Left lung (tissue), 14 donors: ENCODE measurements at regions of chr19 and their contacts with region 1.

Region 1: GRCh38 chr19:2385053-2385721 is 25.1 kb downstream of the TMPRSS9 start:
- DNase-seq: no peak
- ATAC-seq: peak; percentile 27
- H3K4me3 ChIP-seq: no peak overlapping the region
- H3K27ac ChIP-seq: no peak overlapping the region
- H3K4me1 ChIP-seq: peaks cover 0 to 18% of the 10 kb centered on the region in 2 donors
- H3K27me3 ChIP-seq: peaks cover 0 to 70% of the 10 kb centered on the region in 2 donors
- CTCF ChIP-seq: no peak

Region 2: DNA sequence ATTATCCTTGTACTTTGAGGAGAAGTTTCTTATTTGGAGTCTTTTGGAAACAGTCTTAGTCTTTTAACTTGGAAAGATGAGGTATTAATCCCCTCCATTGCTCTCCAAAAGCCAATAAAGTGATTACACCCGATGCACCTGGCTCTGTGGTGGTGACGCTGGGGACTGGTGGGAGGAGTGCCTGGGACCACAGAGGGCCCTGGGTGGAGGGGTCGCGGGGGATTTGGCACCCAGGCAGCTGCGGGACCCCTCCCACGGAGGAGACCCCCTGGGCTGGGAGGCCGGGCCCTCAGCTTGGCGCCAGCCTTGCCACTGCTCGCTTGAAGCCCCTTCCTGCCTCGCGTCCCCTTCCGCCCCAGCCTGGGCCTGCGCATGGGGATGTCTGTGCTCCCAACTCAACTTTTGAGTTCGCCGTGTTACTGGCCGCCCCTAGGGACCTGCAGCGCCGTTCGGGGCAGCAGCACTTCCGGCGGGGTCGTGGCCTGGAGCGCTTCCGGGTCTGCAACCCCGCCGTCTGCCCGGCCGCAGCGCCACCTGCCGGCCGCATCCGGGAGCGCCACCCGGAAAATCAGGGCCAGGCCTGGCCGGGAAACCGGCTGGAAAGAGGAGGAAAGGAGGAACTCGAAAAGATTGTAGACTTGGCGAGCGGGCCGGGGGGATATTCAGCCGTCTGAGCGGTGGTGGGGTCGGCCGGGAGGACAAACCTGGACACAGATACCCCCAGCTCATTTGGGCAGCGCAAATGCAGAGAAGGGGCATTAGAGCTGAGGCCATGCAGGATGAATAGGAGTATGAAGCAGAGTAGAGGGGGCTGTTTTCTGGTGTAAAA is 111.6 kb before region 1 on chr19:
- intact Hi-C with region 1: loop called in 1 of 2 experiments (anchors 10 kb)
- DNase-seq: peak in 3 of 4 donors; percentile 70 to 94 (median 76)
- ATAC-seq: peak; percentile 19
- H3K4me3 ChIP-seq: peak overlapping the region in 1 of 2 donors; percentile 99
- H3K27ac ChIP-seq: peak overlapping the region; percentile 63 to 77
- H3K4me1 ChIP-seq: peaks cover 38 to 67% of the 10 kb centered on the region in 2 donors
- H3K27me3 ChIP-seq: no peaks in the 10 kb centered on the region
- CTCF ChIP-seq: peak; percentile 96 to 97